Activated CD8-positive, alpha-beta memory T cell treated with anti-CD3 and anti-CD28 coated beads, Interleukin-2, amount 10 ng/mL, durations not matched to agents 7 days and 5 days (primary cell): ENCODE measurements at regions of chr14 and their contacts with region 1.

Region 1: GRCh38 chr14:75982266-75983018 is 647 bp upstream of the TGFB3 start:
- DNase-seq: peak; percentile 79
- ATAC-seq: peak; percentile 74
- H3K4me3 Mint-ChIP-seq: peak overlapping the region; percentile 79
- H3K27ac Mint-ChIP-seq: peak overlapping the region; percentile 78
- H3K4me1 Mint-ChIP-seq: peaks cover 42% of the 10 kb centered on the region
- H3K27me3 Mint-ChIP-seq: peaks cover 3% of the 10 kb centered on the region

Region 2: DNA sequence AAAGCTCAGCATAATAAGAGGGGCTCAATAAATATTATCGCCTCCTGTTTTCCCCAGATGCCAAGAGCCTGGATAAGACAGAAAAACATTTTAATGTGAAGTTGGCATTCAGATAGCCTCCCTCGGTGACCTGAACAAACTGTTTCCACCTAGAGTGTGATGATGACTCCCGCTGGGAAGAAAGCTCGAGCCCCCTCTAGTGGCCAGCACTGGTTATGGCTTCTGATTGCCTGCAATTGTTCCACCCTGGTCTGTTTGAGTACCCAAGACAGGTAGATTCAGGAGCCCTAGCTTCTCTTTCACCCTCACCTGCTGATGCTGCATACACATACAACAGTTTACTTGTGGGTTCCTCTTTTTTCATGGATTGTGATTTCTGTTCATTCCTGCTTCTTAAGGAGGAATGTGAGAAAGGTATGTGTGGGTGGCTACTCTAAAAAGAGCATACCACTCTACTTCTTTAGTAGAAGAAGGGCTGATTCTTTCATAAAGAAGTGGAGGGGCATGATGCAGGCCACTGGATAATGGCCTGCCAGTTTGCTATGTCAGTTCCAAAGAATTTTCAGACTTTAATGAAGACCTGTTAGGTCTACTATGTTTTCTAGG is 328.2 kb before region 1 on chr14:
- CTCF ChIA-PET with region 1: interaction called, 24 read pairs
- DNase-seq: peak; percentile 86
- ATAC-seq: peak; percentile 95
- H3K4me3 Mint-ChIP-seq: no peak overlapping the region
- H3K27ac Mint-ChIP-seq: no peak overlapping the region
- H3K4me1 Mint-ChIP-seq: peaks cover 13% of the 10 kb centered on the region
- H3K27me3 Mint-ChIP-seq: no peaks in the 10 kb centered on the region

Region 3: DNA sequence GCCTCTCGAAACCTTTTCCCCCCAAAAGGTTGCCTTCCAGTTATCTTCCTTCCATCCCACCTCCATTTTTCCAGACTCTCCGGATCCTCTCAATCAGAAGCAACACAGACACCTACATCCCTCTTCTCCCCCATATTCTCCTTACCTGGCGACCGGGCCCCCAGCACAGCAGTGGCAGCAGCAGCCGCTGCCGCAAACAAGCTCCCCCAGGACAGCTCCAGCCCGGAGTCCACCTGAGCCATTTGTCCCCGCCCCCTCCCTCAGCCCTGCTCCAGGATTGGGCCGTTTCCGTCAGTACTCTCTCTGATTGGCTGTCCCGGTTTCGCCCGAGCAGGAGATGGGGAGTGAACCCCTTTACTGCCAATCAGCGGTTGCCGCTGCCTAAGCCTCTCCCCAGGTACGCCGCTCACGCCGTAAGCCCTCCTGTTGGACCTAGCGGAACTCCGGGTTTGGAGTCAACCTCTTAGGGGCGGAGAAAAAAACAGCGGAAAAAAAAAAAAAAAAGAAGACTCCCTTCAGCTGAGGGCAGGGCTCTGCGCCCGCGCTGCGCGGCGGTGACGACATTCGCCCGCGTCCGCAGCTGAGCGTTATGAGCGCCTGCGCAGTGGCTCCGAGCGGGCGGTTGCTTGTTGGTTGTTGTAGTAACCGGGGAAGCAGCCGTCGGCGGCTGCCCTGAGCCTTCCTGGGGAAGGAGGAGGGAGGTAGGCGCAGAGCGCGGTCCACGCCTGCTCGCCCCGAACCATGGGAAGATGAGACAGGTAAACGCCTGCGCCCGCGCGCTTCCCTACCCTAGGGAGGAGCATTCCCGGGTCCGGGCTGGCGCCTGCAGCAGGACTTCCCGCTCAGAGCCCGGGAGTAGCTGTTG is 321.6 kb before region 1 on chr14 and contains the starts of genes ERG28 and TTLL5:
- CTCF ChIA-PET with region 1: interaction called, 24 read pairs
- DNase-seq: peak; percentile 99
- ATAC-seq: peak; percentile 98
- H3K4me3 Mint-ChIP-seq: peak within 1 kb of the TSS; percentile 98
- H3K27ac Mint-ChIP-seq: peak within 1 kb of the TSS; percentile 94
- H3K4me1 Mint-ChIP-seq: peaks cover 42% of the 10 kb centered on the region
- H3K27me3 Mint-ChIP-seq: no peaks in the 10 kb centered on the region
- total RNA-seq, gene ERG28: 22.9 to 25.1 TPM
- total RNA-seq, gene TTLL5: 28.9 to 43.4 TPM

Region 4: GRCh38 chr14:75709207-75709812 is 273.1 kb before region 1 on chr14:
- CTCF ChIA-PET with region 1: interaction called, 187 read pairs
- DNase-seq: peak; percentile 73
- ATAC-seq: peak; percentile 78
- H3K4me3 Mint-ChIP-seq: no peak overlapping the region
- H3K27ac Mint-ChIP-seq: no peak overlapping the region
- H3K4me1 Mint-ChIP-seq: no peaks in the 10 kb centered on the region
- H3K27me3 Mint-ChIP-seq: no peaks in the 10 kb centered on the region